ENCODE measurements at regions of chr14 and their contacts with region 1.

Region 1: GRCh38 chr14:21014761-21015190 is 10.1 kb downstream of the NDRG2 start:
- DNase-seq: peak; percentile 69
- CTCF ChIP-seq: peak; percentile 64

Region 2: GRCh38 chr14:20970983-20971704 is 43.6 kb before region 1 on chr14:
- CTCF ChIA-PET with region 1: interaction called, 24 read pairs
- POLR2A ChIA-PET with region 1: no interaction called
- DNase-seq: peak; percentile 87
- CTCF ChIP-seq: peak; percentile 97

Region 3: GRCh38 chr14:21003788-21004346 is 10.9 kb before region 1 on chr14:
- CTCF ChIA-PET with region 1: interaction called, 65 read pairs
- POLR2A ChIA-PET with region 1: no interaction called
- DNase-seq: no peak
- CTCF ChIP-seq: no peak

Region 4: DNA sequence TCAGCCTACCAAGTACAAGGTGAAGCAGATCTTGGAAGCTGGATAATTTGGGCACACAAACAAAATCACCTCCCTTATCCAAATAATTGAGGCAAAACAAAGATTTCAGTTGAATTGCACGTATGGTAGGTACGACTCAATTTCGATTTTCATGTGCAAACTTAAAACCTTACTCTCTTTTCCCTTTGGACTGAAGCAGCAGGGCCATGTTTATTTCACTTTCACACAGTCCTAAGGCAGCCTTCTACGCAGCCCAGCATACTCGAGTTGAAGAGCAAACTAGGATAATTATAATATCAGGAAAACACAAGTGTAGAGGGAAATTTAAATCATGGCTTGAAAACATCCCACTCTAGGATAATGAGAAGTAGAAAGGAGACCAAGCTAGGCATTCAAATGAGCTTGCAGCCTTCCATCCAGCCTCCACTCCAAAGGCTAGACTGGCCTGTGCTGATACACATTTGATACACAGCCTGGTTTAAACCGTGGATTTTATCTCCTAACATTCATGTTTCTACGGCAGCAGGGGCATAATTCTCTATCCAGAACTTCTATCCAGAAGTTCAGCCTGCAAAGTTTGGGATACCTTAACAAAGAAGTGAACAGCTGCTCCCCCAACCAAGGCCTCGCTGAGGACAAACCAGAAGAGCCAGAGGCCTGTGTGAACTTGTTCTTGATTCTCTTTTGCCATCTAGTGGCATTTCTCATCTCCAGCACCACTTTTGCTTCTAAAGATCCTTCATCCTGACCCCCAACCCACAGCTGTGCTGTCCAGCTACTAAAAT is 25.0 kb after region 1 on chr14:
- CTCF ChIA-PET with region 1: interaction called, 69 read pairs
- POLR2A ChIA-PET with region 1: no interaction called
- DNase-seq: peak; percentile 44
- CTCF ChIP-seq: peak; percentile 41

Region 5: GRCh38 chr14:21063479-21063878 is 48.7 kb after region 1 on chr14:
- CTCF ChIA-PET with region 1: interaction called, 38 read pairs
- POLR2A ChIA-PET with region 1: no interaction called
- DNase-seq: no peak
- CTCF ChIP-seq: no peak

Region 6: GRCh38 chr14:21092273-21093011 is 77.7 kb after region 1 on chr14:
- CTCF ChIA-PET with region 1: interaction called, 208 read pairs
- POLR2A ChIA-PET with region 1: no interaction called
- DNase-seq: peak; percentile 92
- CTCF ChIP-seq: peak; percentile 100

Region 7: GRCh38 chr14:21136024-21136423 is 121.2 kb after region 1 on chr14:
- CTCF ChIA-PET with region 1: interaction called, 17 read pairs
- POLR2A ChIA-PET with region 1: no interaction called
- DNase-seq: peak; percentile 57
- CTCF ChIP-seq: peak; percentile 30

Measured in GM10248 (cell line).